ENCODE measurements at regions of chr15 and their contacts with region 1.

Region 1: GRCh38 chr15:72532991-72533601 is 59.0 kb downstream of the ARIH1 start:
- DNase-seq: no peak
- ATAC-seq: peak; percentile 74
- H3K4me3 ChIP-seq: no peak overlapping the region
- H3K27ac ChIP-seq: no peak overlapping the region
- H3K4me1 ChIP-seq: no peaks in the 10 kb centered on the region
- H3K27me3 ChIP-seq: no peaks in the 10 kb centered on the region
- CTCF ChIP-seq: peak; percentile 20 to 44 (median 40); a peak in 4 of 6 replicates
- EP300 ChIP-seq: no peak
- POLR2A ChIP-seq: no peak
- RAD21 ChIP-seq: peak; percentile 29; the same call in 1 of the 2 replicates

Region 2: DNA sequence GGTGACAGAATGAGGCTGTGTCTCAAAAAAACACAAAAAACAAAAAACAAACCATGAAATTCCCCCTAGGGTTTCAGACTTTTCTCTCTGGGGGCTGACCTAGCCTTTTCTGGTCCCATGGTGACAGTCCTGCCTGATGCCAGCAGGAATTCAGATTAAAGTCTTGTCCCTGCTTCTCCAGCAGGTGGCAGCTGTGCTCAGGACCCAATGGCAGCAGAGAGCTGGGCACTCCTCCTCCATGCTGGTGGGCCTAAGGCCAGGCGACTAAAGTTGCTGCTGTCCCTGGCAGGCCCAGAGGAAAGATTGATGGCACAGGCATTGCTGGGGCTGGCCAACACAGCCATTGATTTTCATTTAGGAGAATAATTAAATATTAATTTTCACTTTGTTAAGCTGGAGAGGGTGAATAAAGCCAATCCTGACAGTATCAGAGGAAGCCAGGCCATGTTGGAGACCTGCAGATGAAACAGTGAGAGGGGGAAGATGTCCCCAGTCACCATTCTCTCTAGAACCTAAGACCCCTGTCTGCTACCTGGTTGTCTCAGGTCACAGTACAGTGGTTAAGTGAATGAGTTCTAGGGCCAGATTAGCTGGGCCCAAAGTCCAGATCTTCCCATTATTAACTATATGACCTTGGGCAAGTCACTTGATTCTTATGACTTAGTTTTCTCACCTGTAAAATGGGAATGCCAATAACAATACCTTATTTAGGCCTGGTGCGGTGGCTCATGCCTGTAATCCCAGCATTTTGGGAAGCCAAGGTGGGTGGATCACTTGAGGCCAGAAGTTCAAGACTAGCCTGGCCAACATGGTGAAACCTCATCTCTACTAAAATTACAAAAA is 220.3 kb before region 1 on chr15:
- CTCF ChIA-PET with region 1: interaction called, 39 read pairs
- POLR2A ChIA-PET with region 1: interaction called, 3 read pairs
- RAD21 ChIA-PET with region 1: interaction called, 8 read pairs
- SMC1A ChIA-PET with region 1: interaction called, 15 read pairs
- in situ Hi-C with region 1: no loop called
- intact Hi-C with region 1: loop called (anchors 5 kb)
- DNase-seq: no peak
- ATAC-seq: peak; percentile 100
- H3K4me3 ChIP-seq: no peak overlapping the region
- H3K27ac ChIP-seq: no peak overlapping the region
- H3K4me1 ChIP-seq: no peaks in the 10 kb centered on the region
- H3K27me3 ChIP-seq: no peaks in the 10 kb centered on the region
- CTCF ChIP-seq: peak; percentile 81 to 89 (median 84)
- EP300 ChIP-seq: no peak
- POLR2A ChIP-seq: no peak
- RAD21 ChIP-seq: peak; percentile 85

Region 3: GRCh38 chr15:72545156-72545555 is 12.1 kb after region 1 on chr15:
- CTCF ChIA-PET with region 1: interaction called, 12 read pairs
- POLR2A ChIA-PET with region 1: no interaction called
- RAD21 ChIA-PET with region 1: no interaction called
- SMC1A ChIA-PET with region 1: interaction called, 3 read pairs
- in situ Hi-C with region 1: no loop called
- intact Hi-C with region 1: no loop called
- DNase-seq: no peak
- ATAC-seq: no peak
- H3K4me3 ChIP-seq: no peak overlapping the region
- H3K27ac ChIP-seq: no peak overlapping the region
- H3K4me1 ChIP-seq: no peaks in the 10 kb centered on the region
- H3K27me3 ChIP-seq: no peaks in the 10 kb centered on the region
- CTCF ChIP-seq: no peak
- EP300 ChIP-seq: no peak
- POLR2A ChIP-seq: no peak
- RAD21 ChIP-seq: no peak

Region 4: GRCh38 chr15:72593838-72594237 is 60.7 kb after region 1 on chr15:
- CTCF ChIA-PET with region 1: no interaction called
- POLR2A ChIA-PET with region 1: no interaction called
- RAD21 ChIA-PET with region 1: no interaction called
- SMC1A ChIA-PET with region 1: no interaction called
- in situ Hi-C with region 1: no loop called
- intact Hi-C with region 1: no loop called
- DNase-seq: no peak
- ATAC-seq: no peak
- H3K4me3 ChIP-seq: no peak overlapping the region
- H3K27ac ChIP-seq: no peak overlapping the region
- H3K4me1 ChIP-seq: no peaks in the 10 kb centered on the region
- H3K27me3 ChIP-seq: no peaks in the 10 kb centered on the region
- CTCF ChIP-seq: no peak
- EP300 ChIP-seq: no peak
- POLR2A ChIP-seq: no peak
- RAD21 ChIP-seq: no peak

Measured in GM12878 (cell line).